A549 (cell line): ENCODE measurements at regions of chr11 and their contacts with region 1.

Region 1: DNA sequence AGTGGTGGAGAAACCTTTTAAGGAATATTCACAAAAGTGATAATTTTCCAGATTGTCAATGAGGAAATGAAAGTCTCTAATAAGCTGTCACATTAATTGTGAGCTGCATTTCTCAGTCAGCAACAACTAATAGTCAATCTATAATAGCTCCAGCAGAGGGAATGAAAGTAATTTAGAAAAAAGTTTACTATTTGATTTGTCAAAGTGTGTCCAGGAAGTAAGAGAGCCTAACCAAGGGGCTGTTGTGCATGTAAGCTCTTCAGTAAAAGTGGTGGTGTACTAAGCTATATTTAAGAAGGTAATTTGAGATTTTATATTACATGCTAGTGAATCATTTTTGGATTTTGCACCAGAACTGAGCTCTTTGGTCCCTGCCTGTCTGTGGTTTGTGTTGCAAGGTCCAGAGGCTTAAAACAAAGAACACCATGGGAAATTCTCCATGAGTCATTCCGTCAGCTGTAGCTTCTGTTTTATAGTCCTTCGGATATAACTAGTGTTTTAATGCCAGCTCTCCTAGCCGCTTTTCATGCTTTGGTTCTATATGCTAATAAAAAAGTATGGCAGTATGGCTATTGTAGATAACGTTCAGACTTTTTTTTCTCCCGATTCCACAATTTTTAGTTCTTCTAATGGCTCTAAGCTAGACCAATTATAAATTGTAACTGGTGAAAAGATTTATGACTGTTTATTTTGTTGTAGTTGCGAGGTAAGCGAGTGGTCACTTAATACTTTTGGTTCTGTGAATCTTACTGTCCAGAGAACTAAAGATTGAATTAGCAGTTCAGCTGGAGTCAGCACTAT is 64.6 kb downstream of the ARHGEF12 start:
- DNase-seq: peak; percentile 19 to 66
- ATAC-seq: peak; percentile 94
- H3K4me3 ChIP-seq: peak overlapping the region; percentile 36
- H3K27ac ChIP-seq: peak overlapping the region; percentile 61 to 68
- H3K4me1 ChIP-seq: peaks cover 54% of the 10 kb centered on the region
- CTCF ChIP-seq: no peak
- EP300 ChIP-seq: no peak
- POLR2A ChIP-seq: no peak
- RAD21 ChIP-seq: no peak

Region 2: DNA sequence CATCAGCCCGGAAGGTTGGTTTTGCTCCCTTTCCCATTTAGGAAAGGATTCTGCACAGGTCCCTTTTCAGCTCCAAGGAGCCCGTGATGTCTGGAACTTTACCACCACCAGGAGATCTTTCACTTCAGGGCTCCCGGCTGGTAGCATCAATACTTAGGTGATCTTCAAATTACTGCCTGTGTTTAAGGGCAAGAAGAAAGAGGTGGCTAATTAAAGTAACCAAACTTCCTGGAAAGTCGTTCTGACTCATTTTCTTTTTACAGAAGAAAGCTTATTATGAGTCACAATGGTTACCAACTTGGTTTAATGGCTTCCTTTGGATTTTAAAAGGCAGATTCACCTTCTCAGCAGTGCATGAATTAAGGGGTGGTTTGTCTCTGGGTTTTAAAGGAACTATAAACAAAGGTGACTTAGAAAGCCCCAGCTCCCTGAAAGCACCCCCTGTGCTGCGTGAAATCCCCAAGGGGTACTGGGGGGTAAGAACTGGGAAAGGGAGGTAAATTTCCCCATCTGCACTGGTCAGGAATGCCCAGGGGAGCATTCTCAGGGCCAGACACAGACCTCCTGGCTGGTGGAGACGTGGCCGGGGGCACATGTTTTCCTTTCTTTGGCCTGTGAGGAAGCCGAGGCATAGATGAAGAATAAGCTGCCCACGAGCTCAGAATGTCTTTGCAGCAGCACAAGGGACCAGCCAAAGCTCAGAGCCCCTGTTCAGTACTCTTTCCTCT is 152.0 kb before region 1 on chr11:
- CTCF ChIA-PET with region 1: no interaction called
- POLR2A ChIA-PET with region 1: no interaction called
- DNase-seq: no peak
- ATAC-seq: no peak
- H3K4me3 ChIP-seq: no peak overlapping the region
- H3K27ac ChIP-seq: no peak overlapping the region
- H3K4me1 ChIP-seq: no peaks in the 10 kb centered on the region
- CTCF ChIP-seq: no peak
- EP300 ChIP-seq: no peak
- POLR2A ChIP-seq: no peak
- RAD21 ChIP-seq: no peak

Region 3: GRCh38 chr11:120343429-120343828 is 57.3 kb before region 1 on chr11:
- CTCF ChIA-PET with region 1: no interaction called
- POLR2A ChIA-PET with region 1: no interaction called
- DNase-seq: no peak
- ATAC-seq: no peak
- H3K4me3 ChIP-seq: no peak overlapping the region
- H3K27ac ChIP-seq: no peak overlapping the region
- H3K4me1 ChIP-seq: peaks cover 41% of the 10 kb centered on the region
- CTCF ChIP-seq: no peak
- EP300 ChIP-seq: no peak
- POLR2A ChIP-seq: no peak
- RAD21 ChIP-seq: no peak

Region 4: DNA sequence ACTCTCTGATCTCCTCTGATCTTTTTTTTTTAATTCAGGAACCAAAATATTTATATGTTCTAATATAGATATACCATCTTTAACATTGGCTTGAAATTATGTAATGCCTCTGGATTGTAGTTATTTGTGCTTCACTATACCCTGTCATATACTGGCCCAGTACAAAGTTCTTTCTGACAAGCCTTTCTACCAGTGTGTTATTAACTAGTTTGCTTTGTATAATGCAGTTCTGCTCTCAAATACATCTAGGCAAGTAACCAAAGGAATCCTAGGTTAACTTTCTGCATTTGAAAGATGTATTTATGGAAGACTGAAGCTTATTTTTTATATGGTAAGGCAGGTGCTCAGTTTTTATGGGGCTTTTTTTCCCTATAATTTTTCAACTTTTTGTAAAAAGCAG is 28.5 kb before region 1 on chr11:
- CTCF ChIA-PET with region 1: no interaction called
- POLR2A ChIA-PET with region 1: interaction called, 11 read pairs
- DNase-seq: no peak
- ATAC-seq: no peak
- H3K4me3 ChIP-seq: no peak overlapping the region
- H3K27ac ChIP-seq: no peak overlapping the region
- H3K4me1 ChIP-seq: peaks cover 28% of the 10 kb centered on the region
- CTCF ChIP-seq: no peak
- EP300 ChIP-seq: no peak
- POLR2A ChIP-seq: no peak
- RAD21 ChIP-seq: no peak